ENCODE measurements at regions of chr12 and their contacts with region 1.

Region 1: GRCh38 chr12:111812881-111813741 is 28.9 kb upstream of the MAPKAPK5 start:
- DNase-seq: peak; percentile 68
- H3K4me3 ChIP-seq: no peak overlapping the region
- H3K27ac ChIP-seq: no peak overlapping the region
- H3K4me1 ChIP-seq: no peaks in the 10 kb centered on the region
- H3K27me3 ChIP-seq: no peaks in the 10 kb centered on the region
- CTCF ChIP-seq: peak; percentile 65 to 85

Region 2: DNA sequence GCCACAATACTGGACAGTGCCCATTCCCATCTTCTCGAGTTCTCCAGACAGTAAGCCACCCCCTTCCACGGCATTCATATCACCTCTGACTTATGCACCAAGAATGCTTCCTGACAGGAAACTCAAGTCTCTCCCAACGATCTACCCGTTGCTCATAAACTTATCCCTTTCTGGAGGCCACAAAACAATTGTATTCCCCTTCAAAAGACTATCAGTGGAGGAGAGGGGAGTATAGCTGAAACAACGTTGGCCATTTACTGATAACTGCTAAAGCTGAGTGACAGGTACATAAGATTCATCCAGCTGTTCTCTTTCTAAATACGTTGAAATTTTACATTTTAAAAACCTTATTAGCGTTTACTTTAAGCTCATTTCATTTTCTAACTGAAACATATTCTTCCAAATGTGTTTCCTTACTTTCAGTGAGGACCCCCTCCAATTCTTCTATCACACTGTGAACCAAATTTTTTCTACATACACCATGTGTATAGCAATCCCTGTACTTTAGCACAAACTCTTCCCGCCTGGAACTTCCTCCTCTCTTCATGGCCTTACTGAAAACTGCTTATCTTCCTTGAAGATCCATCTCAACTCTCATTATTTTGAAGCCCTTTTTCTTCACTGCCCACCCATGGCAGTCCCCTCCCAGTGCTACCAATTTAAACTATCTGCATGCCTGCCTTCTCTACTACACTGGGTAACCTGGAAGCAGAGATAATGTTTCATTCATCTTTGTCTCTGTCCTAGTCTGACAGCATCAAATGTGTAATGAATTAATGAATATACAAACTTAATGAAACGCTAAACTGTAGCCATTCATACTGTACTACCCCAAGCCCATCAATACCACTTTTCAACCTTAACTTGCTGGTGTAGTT is 242.8 kb before region 1 on chr12:
- CTCF ChIA-PET with region 1: no interaction called
- dilution Hi-C with region 1: no loop called
- in situ Hi-C with region 1: no loop called
- intact Hi-C with region 1: no loop called
- DNase-seq: peak; percentile 73
- H3K4me3 ChIP-seq: no peak overlapping the region
- H3K27ac ChIP-seq: peak overlapping the region; percentile 42
- H3K4me1 ChIP-seq: peaks cover 24% of the 10 kb centered on the region
- H3K27me3 ChIP-seq: no peaks in the 10 kb centered on the region
- CTCF ChIP-seq: no peak

Region 3: GRCh38 chr12:111788178-111788654 is 24.9 kb before region 1 on chr12:
- CTCF ChIA-PET with region 1: no interaction called
- dilution Hi-C with region 1: no loop called
- in situ Hi-C with region 1: no loop called
- intact Hi-C with region 1: loop called (anchors 2 kb)
- DNase-seq: no peak
- H3K4me3 ChIP-seq: no peak overlapping the region
- H3K27ac ChIP-seq: no peak overlapping the region
- H3K4me1 ChIP-seq: no peaks in the 10 kb centered on the region
- H3K27me3 ChIP-seq: no peaks in the 10 kb centered on the region
- CTCF ChIP-seq: peak; percentile 27 to 81

Region 4: GRCh38 chr12:111850526-111850925 is 37.4 kb after region 1 on chr12:
- CTCF ChIA-PET with region 1: no interaction called
- dilution Hi-C with region 1: no loop called
- in situ Hi-C with region 1: no loop called
- intact Hi-C with region 1: no loop called
- DNase-seq: no peak
- H3K4me3 ChIP-seq: no peak overlapping the region
- H3K27ac ChIP-seq: no peak overlapping the region
- H3K4me1 ChIP-seq: no peaks in the 10 kb centered on the region
- H3K27me3 ChIP-seq: no peaks in the 10 kb centered on the region
- CTCF ChIP-seq: no peak

Measured in mammary epithelial cell (primary cell).